Activated T-helper 1 cell treated with anti-CD3 and anti-CD28 coated beads, Interleukin-12 subunit alpha, Interleukin-12 subunit beta, Interleukin-2, Interleukin-4 antibody, amounts not matched to agents 30 ng/mL and 10 ng/mL and 1 ng/mL, durations not matched to agents 14 hours and 24 hours and 36 hours (primary cell): ENCODE measurements at regions of chr7 and their contacts with region 1.

Region 1: DNA sequence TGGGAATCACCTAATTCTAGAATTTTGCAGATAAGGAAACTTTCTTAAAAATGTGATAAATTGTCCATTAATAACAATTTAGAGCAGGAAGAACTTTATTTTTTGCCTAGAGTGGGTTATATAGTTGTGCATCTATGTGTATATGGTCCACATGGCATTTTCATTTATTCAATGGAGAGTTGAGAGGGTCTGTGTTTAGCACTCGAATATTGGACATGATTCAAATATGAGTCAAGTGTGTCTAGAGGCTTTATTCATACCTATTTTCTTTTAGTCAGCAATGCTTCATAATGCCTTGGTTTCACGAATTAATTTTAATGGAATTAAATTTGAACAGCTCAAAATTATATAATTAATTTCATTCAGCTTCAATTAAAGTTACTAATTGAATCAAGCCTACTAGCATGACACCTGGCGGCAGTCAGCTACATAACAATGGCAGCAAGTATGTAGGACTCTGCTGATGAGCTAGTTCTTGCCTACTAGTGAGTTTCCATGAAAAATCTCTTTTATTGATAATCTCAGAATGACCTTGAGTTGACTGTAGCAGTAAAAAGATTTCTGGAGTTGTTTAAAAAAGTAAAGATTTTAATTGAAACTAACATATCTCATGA is 17.7 kb downstream of the MDFIC start:
- DNase-seq: no peak
- H3K4me3 Mint-ChIP-seq: no peak overlapping the region
- H3K27ac Mint-ChIP-seq: no peak overlapping the region
- H3K4me1 Mint-ChIP-seq: peaks cover 73% of the 10 kb centered on the region
- H3K27me3 Mint-ChIP-seq: no peaks in the 10 kb centered on the region

Region 2: GRCh38 chr7:114959931-114960330 is 20.3 kb after region 1 on chr7:
- intact Hi-C with region 1: loop called (anchors 2 kb)
- DNase-seq: no peak
- H3K4me3 Mint-ChIP-seq: no peak overlapping the region
- H3K27ac Mint-ChIP-seq: no peak overlapping the region
- H3K4me1 Mint-ChIP-seq: peaks cover 43% of the 10 kb centered on the region
- H3K27me3 Mint-ChIP-seq: no peaks in the 10 kb centered on the region